Heart right ventricle (tissue), 16 donors: ENCODE measurements at regions of chr5 and their contacts with region 1.

Region 1: DNA sequence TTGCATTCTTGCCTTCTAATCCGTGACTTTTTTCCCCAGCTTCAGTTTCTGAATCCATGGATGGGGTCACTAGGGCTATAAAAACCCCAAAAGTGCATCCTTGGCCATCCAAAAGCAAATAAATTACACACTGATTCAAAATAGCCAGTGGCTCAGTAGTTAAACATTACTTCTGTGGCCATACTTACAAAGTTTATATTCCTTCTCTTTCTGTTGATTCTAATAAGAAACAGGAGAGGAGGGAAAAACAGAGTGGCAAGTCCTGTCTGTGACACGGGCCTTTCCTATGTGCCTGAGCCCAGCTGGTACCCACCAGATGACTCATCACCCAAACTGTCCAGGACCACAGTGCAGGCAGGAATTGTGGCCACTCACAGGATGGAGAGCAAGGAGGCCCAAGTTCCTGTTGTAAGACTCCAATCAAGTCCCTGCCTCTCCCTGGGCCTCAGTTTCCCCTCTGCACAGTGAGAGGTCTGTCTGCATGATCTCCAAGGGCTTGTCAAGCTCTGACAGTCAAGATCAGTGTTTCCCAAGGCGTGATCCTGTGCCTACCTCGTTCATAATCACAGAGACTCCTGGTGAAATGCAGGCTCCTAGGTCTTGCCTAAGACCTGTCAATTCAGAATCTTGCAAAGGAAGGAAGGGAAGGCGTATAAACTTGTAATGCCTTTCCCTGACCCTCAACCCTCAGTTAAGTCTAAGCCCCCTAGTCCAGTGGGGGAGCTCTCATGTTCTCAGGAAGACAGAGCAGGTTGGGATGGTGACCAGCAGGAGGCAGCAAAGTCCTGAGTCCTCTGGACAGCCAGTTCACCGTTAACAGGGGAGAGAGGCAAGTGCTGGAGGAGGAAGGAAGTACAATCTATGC is 29.5 kb downstream of the TNIP1 start:
- DNase-seq: peak; percentile 81 to 88
- ATAC-seq: peak; percentile 77 to 90 (median 84)
- H3K4me3 ChIP-seq: no peak overlapping the region
- H3K27ac ChIP-seq: peak overlapping the region in 6 of 10 donors; percentile 27 to 54 (median 40)
- H3K4me1 ChIP-seq: peaks cover 6 to 45% (median 15%) of the 10 kb centered on the region in 9 donors
- H3K27me3 ChIP-seq: no peaks in the 10 kb centered on the region
- CTCF ChIP-seq: peak; percentile 69 to 94 (median 88)

Region 2: DNA sequence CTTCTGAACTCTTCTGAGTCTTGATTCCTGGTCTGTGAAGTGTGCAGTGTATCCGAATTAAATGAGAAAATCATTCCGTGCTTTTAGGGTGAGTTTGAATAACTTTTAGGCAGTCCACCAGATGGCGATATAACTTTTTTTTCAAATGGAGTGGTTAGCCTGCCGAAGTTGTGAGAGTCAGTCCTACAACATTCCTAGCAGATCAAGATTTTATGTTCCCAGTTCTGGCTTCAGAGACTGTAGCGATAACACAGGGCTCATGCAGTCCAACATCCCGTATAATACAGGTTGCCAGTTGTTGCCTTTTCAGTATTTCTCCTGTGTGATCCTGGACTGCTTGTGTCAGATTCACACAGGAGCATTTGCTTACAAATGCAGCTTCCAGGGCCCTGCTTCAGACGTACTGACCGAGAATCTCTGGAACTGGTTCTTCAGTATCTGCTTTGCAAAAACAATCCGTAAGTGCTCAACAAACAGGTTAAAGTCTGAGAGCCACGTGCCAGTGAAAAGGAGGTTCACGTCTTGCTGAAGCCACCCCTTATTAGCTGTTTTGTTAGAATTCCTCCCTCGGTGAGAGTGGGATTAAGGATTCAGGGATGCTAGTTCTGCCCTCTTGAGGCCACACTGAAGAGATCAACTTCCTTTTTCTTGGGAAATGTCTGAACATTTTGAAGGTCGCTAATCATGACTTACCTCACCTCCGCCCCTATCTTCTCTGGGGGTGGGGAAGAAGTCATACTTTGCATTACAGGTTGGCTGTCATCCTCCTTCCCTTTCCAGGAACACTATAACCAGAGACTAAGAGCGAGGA is 250.0 kb before region 1 on chr5:
- intact Hi-C with region 1: loop called in 1 of 10 experiments (anchors 2 kb)
- DNase-seq: peak in 1 of 2 donors; percentile 51
- ATAC-seq: peak; percentile 75 to 93 (median 90)
- H3K4me3 ChIP-seq: peak overlapping the region in 9 of 10 donors; percentile 18 to 51 (median 43)
- H3K27ac ChIP-seq: peak overlapping the region in 9 of 10 donors; percentile 10 to 63 (median 41)
- H3K4me1 ChIP-seq: peaks cover 0 to 13% (median 4%) of the 10 kb centered on the region in 9 donors
- H3K27me3 ChIP-seq: no peaks in the 10 kb centered on the region
- CTCF ChIP-seq: peak; percentile 27 to 67 (median 53)

Region 3: DNA sequence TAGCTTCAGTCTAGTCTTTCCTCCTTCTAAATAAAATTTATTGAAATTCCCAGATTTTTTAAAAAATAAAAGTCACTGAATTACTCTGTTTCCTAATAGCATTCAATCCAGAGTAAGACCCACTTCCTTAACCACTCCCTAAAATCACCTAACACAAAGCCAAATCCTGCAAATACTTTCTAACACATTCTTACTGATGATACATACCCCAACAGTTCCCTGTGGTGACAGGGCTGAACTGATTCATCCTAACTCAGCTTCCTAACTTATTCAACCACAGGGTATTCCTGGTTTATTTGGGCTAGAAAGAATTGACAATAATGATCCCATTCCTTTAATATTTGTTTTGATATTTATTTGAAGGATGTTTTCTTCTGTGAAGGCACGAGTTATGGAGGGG is 105.8 kb before region 1 on chr5:
- intact Hi-C with region 1: no loop called
- DNase-seq: no peak
- ATAC-seq: no peak
- H3K4me3 ChIP-seq: peak overlapping the region in 8 of 10 donors; percentile 52 to 73 (median 67)
- H3K27ac ChIP-seq: peak overlapping the region in 4 of 10 donors; percentile 78 to 93 (median 92)
- H3K4me1 ChIP-seq: peaks cover 0 to 9% (median 0%) of the 10 kb centered on the region in 9 donors
- H3K27me3 ChIP-seq: no peaks in the 10 kb centered on the region
- CTCF ChIP-seq: no peak

Region 4: GRCh38 chr5:151115274-151115905 is 64.1 kb after region 1 on chr5:
- intact Hi-C with region 1: loop called (anchors 1 to 2 kb)
- DNase-seq: peak; percentile 78 to 81
- ATAC-seq: peak in 6 of 8 donors; percentile 67 to 74 (median 70)
- H3K4me3 ChIP-seq: no peak overlapping the region
- H3K27ac ChIP-seq: peak overlapping the region in 1 of 10 donors; percentile 2
- H3K4me1 ChIP-seq: peaks cover 0 to 21% (median 8%) of the 10 kb centered on the region in 9 donors
- H3K27me3 ChIP-seq: no peaks in the 10 kb centered on the region
- CTCF ChIP-seq: peak; percentile 87 to 99 (median 96)

Region 5: DNA sequence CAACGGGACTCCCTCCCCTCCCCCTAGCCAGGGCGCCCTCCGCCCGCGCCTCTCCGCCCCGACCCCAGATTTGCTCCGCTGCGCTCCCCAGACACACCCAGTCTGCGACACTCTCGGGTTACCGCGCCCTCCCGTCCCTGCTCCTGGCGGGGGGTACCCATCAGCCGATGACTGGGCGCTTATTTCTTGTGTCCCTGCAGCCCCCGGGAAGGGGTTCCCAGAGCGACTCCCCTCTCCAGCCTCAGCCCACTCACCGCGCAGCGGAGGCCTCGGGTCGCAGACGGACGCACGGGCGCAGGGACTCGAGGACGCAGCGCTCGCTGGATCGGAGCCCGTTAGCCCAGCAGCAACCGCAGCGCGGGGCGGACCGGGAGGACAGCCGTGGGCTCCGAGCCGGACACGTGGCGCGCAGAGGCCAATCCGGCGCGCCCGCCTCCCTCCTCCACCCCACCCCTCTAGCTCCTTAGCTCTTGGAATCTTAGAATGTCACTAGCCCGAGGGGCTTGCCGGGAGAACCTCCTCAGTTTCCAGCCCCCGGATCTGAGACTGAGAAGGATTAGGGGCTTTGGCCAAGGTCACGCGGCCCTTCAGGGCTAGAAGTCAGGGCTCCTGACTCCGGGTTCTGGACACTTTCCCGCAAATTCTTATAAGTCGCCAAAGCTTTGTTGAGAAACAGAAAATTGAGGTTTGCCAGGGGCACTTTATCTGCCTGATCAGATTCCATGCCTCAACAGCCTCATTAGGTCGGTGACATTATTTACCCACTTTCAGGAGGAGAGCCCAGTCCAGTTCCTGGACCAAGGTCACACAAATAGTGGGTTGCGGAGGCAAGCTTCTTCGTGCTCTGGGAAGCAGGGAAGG is 106.4 kb after region 1 on chr5 and contains the start of gene ANXA6:
- intact Hi-C with region 1: loop called in 5 of 10 experiments (anchors 2 to 5 kb)
- DNase-seq: peak; percentile 89 to 92
- ATAC-seq: peak; percentile 98 to 99 (median 99)
- H3K4me3 ChIP-seq: peak within 1 kb of the TSS; percentile 58 to 95 (median 84)
- H3K27ac ChIP-seq: peak within 1 kb of the TSS; percentile 61 to 96 (median 89)
- H3K4me1 ChIP-seq: peaks cover 16 to 56% (median 48%) of the 10 kb centered on the region in 9 donors
- H3K27me3 ChIP-seq: no peaks in the 10 kb centered on the region
- CTCF ChIP-seq: no peak
- total RNA-seq, gene ANXA6: 182 to 275 (median 219) TPM

Region 6: DNA sequence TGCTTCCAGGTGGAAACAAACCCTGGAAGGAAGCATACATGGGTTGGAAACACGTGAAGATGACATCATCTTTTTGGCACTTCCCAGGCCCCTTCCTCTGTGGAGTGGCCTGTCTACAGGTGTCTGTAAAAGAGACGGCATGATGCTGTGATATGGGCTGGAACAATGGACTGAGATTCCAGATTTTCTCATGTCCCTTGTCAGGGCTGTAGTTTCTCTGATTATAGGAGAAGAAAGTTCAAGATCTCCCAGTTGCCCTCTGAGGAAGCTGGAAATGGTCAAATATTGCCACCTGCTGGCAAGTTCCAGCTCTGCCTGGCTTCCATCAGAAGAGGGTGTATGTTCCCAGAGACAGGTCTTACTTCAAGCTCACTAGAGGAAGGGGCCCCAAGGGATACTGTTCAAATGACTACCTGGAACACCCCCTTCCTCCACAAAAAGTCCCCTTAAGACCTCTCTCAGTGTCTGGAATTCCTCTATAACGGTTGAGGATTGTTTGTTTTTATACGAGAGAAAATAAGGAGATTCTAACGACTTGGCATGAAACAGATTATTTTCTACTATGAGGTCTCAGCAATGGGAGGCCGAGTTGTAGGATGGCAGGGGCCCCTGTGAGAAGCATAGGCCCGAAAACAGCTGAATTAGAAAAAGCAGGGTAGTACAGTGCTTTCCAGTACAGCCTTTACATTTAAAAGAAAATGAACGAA is 113.5 kb after region 1 on chr5:
- intact Hi-C with region 1: loop called in 6 of 10 experiments (anchors 1 to 5 kb)
- DNase-seq: peak; percentile 61 to 84
- ATAC-seq: peak; percentile 82 to 94 (median 91)
- H3K4me3 ChIP-seq: no peak overlapping the region
- H3K27ac ChIP-seq: peak overlapping the region in 3 of 10 donors; percentile 3 to 12 (median 9)
- H3K4me1 ChIP-seq: peaks cover 3 to 21% (median 13%) of the 10 kb centered on the region in 9 donors
- H3K27me3 ChIP-seq: no peaks in the 10 kb centered on the region
- CTCF ChIP-seq: peak; percentile 79 to 99 (median 90)